PC-3 (cell line): ENCODE measurements at regions of chr4 and their contacts with region 1.

Region 1: GRCh38 chr4:124712372-124713184 is at the start of gene ANKRD50:
- DNase-seq: peak; percentile 82
- ATAC-seq: peak; percentile 59
- H3K4me3 ChIP-seq: peak within 1 kb of the TSS; percentile 92
- H3K27ac ChIP-seq: peak within 1 kb of the TSS; percentile 93
- H3K4me1 ChIP-seq: peaks cover 29% of the 10 kb centered on the region
- H3K27me3 ChIP-seq: no peaks in the 10 kb centered on the region
- CTCF ChIP-seq: no peak
- total RNA-seq, gene ANKRD50: 26.3 and 29.3 TPM in 2 replicates

Region 2: DNA sequence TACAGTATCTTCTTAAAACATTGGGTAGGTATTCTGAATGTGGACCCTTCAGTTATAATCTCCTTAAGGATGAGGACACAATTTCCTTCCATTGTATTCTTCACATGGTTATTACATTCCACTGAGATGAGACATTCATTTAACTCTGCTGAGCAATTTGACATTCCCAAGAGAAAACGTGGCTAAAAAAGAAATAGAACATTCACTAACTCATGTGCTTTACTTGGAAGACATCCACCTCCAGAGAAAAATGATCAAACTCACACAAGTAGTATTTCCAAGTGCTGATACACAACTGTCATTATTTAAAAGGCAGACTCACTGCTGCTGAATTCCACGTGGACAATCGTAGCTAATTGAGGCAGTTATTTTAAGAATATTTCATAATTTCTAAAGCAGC is 227.8 kb after region 1 on chr4:
- CTCF ChIA-PET with region 1: no interaction called
- POLR2A ChIA-PET with region 1: no interaction called
- intact Hi-C with region 1: loop called (anchors 2 kb)
- DNase-seq: peak; percentile 88
- ATAC-seq: peak; percentile 37
- H3K4me3 ChIP-seq: no peak overlapping the region
- H3K27ac ChIP-seq: peak overlapping the region; percentile 98
- H3K4me1 ChIP-seq: peaks cover 66% of the 10 kb centered on the region
- H3K27me3 ChIP-seq: no peaks in the 10 kb centered on the region
- CTCF ChIP-seq: no peak

Region 3: GRCh38 chr4:125070484-125071260 is 358.1 kb after region 1 on chr4:
- CTCF ChIA-PET with region 1: no interaction called
- POLR2A ChIA-PET with region 1: no interaction called
- intact Hi-C with region 1: loop called (anchors 2 kb)
- DNase-seq: no peak
- ATAC-seq: no peak
- H3K4me3 ChIP-seq: no peak overlapping the region
- H3K27ac ChIP-seq: no peak overlapping the region
- H3K4me1 ChIP-seq: no peaks in the 10 kb centered on the region
- H3K27me3 ChIP-seq: no peaks in the 10 kb centered on the region
- CTCF ChIP-seq: no peak

Region 4: GRCh38 chr4:125244848-125245450 is 532.4 kb after region 1 on chr4:
- CTCF ChIA-PET with region 1: interaction called, 3 read pairs
- POLR2A ChIA-PET with region 1: no interaction called
- intact Hi-C with region 1: loop called (anchors 5 kb)
- DNase-seq: peak; percentile 46
- ATAC-seq: peak; percentile 40
- H3K4me3 ChIP-seq: no peak overlapping the region; the same call in 1 of the 2 replicates
- H3K27ac ChIP-seq: no peak overlapping the region
- H3K4me1 ChIP-seq: peaks cover 14% of the 10 kb centered on the region
- H3K27me3 ChIP-seq: no peaks in the 10 kb centered on the region
- CTCF ChIP-seq: peak; percentile 67